ENCODE measurements at regions of chr5 and their contacts with region 1.

Region 1: DNA sequence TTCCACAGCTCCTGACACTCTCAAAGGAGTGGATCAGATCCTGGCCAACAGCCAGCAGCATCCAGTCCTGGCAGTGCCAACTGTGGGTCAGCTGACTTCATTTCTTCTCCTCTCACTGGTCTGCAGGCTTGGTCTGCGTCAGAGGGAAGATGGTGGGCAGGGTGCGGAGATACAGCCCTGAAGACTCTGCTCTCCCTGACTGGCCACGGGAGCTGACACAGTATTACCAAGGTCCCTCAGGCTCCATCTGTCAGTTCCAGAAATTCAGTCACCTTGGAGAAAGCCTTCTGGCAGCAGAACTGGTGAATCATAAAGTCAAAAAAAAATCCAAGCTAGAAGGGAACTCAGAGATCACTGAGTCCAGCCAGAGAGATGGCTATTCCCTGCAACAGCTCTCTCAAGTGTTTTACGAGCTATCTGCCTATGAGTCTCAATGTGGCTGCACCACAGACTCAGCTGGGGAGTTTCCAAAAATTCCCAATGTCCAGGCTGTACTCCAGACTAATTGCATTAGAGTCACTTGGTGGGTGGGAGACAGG is 28.0 kb downstream of the C1QTNF2 start:
- DNase-seq: no peak
- H3K4me3 Mint-ChIP-seq: no peak overlapping the region
- H3K27ac Mint-ChIP-seq: no peak overlapping the region
- H3K4me1 Mint-ChIP-seq: no peaks in the 10 kb centered on the region
- H3K27me3 Mint-ChIP-seq: no peaks in the 10 kb centered on the region

Region 2: GRCh38 chr5:160021831-160022446 is 320.5 kb before region 1 on chr5:
- CTCF ChIA-PET with region 1: interaction called, 77 read pairs
- DNase-seq: peak; percentile 64
- H3K4me3 Mint-ChIP-seq: no peak overlapping the region
- H3K27ac Mint-ChIP-seq: no peak overlapping the region
- H3K4me1 Mint-ChIP-seq: peaks cover 17% of the 10 kb centered on the region
- H3K27me3 Mint-ChIP-seq: no peaks in the 10 kb centered on the region

Region 3: DNA sequence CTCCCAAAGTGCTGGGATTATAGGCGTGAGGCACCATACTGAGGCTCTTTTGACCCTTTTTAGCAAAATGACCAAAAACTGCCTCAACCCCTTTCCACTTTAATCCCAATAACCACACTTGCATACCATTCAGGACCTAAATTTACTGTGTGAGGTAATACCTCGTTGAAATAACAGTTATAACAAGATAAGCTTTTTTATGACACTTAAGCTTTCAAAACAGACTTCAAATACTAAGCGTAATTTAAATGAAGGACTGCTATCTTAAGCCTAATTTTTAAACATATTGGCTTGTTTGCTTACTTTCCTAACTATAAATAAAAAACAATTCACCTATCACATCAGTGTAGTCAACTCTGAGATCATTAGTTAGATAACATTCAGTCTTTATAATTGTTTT is 261.0 kb before region 1 on chr5:
- CTCF ChIA-PET with region 1: interaction called, 14 read pairs
- DNase-seq: no peak
- H3K4me3 Mint-ChIP-seq: no peak overlapping the region
- H3K27ac Mint-ChIP-seq: no peak overlapping the region
- H3K4me1 Mint-ChIP-seq: no peaks in the 10 kb centered on the region
- H3K27me3 Mint-ChIP-seq: no peaks in the 10 kb centered on the region

Region 4: GRCh38 chr5:160199410-160199911 is 143.0 kb before region 1 on chr5:
- CTCF ChIA-PET with region 1: interaction called, 54 read pairs
- DNase-seq: peak; percentile 74
- H3K4me3 Mint-ChIP-seq: peak overlapping the region; percentile 37
- H3K27ac Mint-ChIP-seq: no peak overlapping the region
- H3K4me1 Mint-ChIP-seq: peaks cover 11% of the 10 kb centered on the region
- H3K27me3 Mint-ChIP-seq: peaks cover 36% of the 10 kb centered on the region

Measured in activated naive CD4-positive, alpha-beta T cell treated with anti-CD3 and anti-CD28 coated beads, Interleukin-2, amount 10 ng/mL, durations not matched to agents 7 days and 5 days (primary cell).